ENCODE measurements at regions of chr1 and their contacts with region 1.

Region 1: GRCh38 chr1:1665800-1666251 is 7.0 kb upstream of the CDK11B start:
- DNase-seq: peak; percentile 39
- H3K4me3 Mint-ChIP-seq: no peak overlapping the region
- H3K27ac Mint-ChIP-seq: no peak overlapping the region
- H3K4me1 Mint-ChIP-seq: peaks cover 8% of the 10 kb centered on the region
- H3K27me3 Mint-ChIP-seq: no peaks in the 10 kb centered on the region

Region 2: DNA sequence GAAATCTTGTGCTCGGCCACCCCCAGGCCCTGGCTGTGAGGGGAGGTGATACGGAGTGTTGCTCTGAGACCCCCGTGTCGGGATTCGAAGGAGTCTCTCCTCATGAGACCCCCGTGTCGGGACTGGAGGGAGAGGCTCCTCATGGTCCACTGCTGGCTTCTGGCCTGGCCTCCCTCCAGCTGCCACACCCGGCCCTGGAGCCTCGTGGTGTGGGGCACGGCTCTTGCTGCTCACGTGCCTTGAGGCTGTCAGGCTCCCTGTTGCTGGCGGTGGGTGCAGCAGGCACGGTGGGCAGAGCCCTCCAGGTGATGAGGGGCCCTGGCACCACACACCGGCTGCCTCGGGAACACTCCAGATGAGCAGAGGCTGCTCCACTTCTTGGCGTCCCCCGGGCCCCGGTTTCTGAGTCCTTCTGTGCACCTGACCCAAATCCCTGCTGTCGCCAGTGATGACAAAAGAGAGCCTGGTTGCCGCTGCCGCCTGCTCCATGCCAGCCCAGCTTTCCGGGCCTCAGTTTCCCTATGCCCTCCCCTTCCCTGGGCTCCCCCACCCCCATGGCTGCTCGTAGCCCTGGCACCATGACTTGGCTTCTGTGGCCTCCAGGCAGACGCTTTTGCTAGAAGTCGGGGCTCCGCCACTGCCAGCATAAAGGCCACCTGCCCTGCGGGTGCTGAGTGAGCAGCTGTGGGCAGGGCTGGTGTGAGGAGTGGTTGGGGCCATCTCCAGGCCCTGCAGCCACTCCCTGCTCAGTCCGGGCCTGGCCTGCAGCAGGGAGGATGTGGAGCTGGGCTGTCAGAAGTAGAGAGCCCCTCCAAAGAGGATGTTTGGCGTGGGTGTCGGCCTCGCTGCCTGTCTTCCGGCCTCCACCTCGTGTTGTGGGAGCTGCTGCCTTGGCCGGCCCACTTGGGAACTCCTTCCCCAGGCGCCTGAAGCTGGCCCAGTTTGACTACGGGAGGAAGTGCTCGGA is 137.2 kb before region 1 on chr1:
- CTCF ChIA-PET with region 1: no interaction called
- POLR2A ChIA-PET with region 1: no interaction called
- DNase-seq: no peak
- H3K4me3 Mint-ChIP-seq: no peak overlapping the region
- H3K27ac Mint-ChIP-seq: no peak overlapping the region
- H3K4me1 Mint-ChIP-seq: no peaks in the 10 kb centered on the region
- H3K27me3 Mint-ChIP-seq: no peaks in the 10 kb centered on the region

Region 3: DNA sequence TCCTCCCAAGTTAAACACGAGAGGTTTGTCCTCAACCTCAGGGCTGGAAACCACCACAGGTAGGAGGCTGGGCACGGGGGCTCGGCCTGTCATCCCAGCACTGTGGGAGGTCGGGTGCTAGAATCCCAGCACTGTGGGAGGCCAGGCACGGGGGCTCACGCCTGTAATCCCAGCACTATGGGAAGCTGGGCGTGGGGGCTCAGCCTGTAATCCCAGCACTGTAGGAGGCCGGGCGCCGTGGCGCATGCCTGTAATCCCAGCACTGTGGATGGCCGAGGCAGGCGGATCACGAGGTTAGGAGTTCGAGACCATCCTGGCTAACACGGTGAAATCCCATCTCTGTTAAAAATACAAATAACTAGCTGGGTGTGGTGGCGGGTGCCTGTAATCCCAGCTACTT is 65.0 kb after region 1 on chr1:
- CTCF ChIA-PET with region 1: interaction called, 20 read pairs
- POLR2A ChIA-PET with region 1: interaction called, 12 read pairs
- DNase-seq: no peak
- H3K4me3 Mint-ChIP-seq: no peak overlapping the region
- H3K27ac Mint-ChIP-seq: peak overlapping the region; percentile 54
- H3K4me1 Mint-ChIP-seq: peaks cover 32% of the 10 kb centered on the region
- H3K27me3 Mint-ChIP-seq: no peaks in the 10 kb centered on the region